ENCODE measurements at regions of chr5 and their contacts with region 1.

Region 1: GRCh38 chr5:177006265-177006972 is at the start of gene UIMC1:
- DNase-seq: peak; percentile 84 to 96 (median 89)
- ATAC-seq: peak; percentile 83
- H3K4me3 ChIP-seq: peak within 1 kb of the TSS; percentile 91
- H3K4me3 Mint-ChIP-seq: peak within 1 kb of the TSS; percentile 99
- H3K27ac ChIP-seq: peak within 1 kb of the TSS; percentile 70 to 72
- H3K27ac Mint-ChIP-seq: peak within 1 kb of the TSS; percentile 95
- H3K4me1 ChIP-seq: peaks cover 32% of the 10 kb centered on the region
- H3K4me1 Mint-ChIP-seq: peaks cover 35% of the 10 kb centered on the region
- H3K27me3 ChIP-seq: no peaks in the 10 kb centered on the region
- H3K27me3 Mint-ChIP-seq: no peaks in the 10 kb centered on the region
- CTCF ChIP-seq: no peak
- total RNA-seq, gene UIMC1: 42.3 to 50.8 TPM

Region 2: DNA sequence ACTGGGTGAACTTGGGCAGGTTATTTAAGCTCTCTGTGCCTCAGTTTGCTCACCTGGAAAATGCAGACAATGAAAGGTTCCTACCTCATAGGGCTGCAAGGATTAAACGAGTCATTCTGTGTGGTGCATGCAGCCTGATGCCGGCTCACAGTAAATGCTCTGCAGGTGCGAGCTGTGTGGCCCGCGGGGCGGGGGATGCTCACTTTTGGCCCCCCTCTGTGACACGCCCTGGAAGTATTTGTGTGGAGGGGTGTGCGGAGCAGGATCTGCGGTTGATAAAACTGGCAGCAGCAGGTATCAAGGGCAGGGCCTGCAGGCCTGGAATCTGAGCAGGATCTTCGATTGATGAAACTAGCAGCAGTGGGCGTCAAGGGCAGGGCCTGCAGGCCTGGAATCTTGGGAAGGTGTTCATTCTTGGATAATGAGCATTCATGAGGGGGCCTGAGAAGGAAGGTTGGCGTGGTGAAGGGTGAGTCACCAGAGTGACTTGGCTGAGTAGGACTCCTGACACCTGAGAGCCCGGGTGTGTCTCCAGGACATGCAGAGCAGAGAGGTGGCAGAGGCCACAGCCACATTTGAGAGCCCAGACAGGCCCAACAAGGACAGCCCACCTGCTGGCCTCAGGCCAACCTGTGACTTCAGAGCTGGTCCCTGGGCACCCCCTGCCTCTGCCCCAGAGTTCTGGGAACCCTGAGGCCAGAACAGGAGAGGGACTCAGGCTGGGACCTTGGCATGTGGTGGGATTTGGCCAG is 184.2 kb before region 1 on chr5:
- CTCF ChIA-PET with region 1: no interaction called
- POLR2A ChIA-PET with region 1: no interaction called
- intact Hi-C with region 1: no loop called
- DNase-seq: no peak
- ATAC-seq: no peak
- H3K4me3 ChIP-seq: no peak overlapping the region
- H3K4me3 Mint-ChIP-seq: no peak overlapping the region
- H3K27ac ChIP-seq: no peak overlapping the region
- H3K27ac Mint-ChIP-seq: no peak overlapping the region
- H3K4me1 ChIP-seq: peaks cover 9% of the 10 kb centered on the region
- H3K4me1 Mint-ChIP-seq: peaks cover 9% of the 10 kb centered on the region
- H3K27me3 ChIP-seq: peaks cover 18 to 31% of the 10 kb centered on the region in 2 experiments
- H3K27me3 Mint-ChIP-seq: peaks cover 62% of the 10 kb centered on the region
- CTCF ChIP-seq: no peak

Region 3: DNA sequence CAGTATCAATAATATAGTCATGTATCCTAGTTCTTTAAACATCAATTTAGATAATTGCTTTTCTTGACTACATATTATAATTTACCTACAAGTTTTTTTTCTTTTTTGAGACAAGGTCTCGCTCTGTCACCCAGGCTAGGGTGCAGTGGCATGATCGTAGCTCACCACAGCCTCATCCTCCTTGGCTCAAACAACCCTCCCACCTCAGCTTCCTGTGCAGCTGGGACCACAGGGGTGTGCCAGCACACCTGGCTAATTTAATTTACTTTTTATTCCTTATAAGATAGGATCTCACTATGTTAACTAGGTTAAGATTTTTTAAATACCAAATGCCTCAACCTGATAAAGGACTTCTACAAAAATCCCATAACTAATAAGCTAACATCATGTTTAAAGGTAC is 20.9 kb before region 1 on chr5:
- CTCF ChIA-PET with region 1: interaction called, 5 read pairs
- POLR2A ChIA-PET with region 1: interaction called, 32 read pairs
- intact Hi-C with region 1: no loop called
- DNase-seq: peak; percentile 7 to 74 (median 37)
- ATAC-seq: peak; percentile 99
- H3K4me3 ChIP-seq: no peak overlapping the region
- H3K4me3 Mint-ChIP-seq: peak overlapping the region; percentile 54
- H3K27ac ChIP-seq: peak overlapping the region in 1 of 2 donors; percentile 40
- H3K27ac Mint-ChIP-seq: peak overlapping the region; percentile 89
- H3K4me1 ChIP-seq: peaks cover 19% of the 10 kb centered on the region
- H3K4me1 Mint-ChIP-seq: peaks cover 34% of the 10 kb centered on the region
- H3K27me3 ChIP-seq: no peaks in the 10 kb centered on the region
- H3K27me3 Mint-ChIP-seq: no peaks in the 10 kb centered on the region
- CTCF ChIP-seq: no peak

Region 4: DNA sequence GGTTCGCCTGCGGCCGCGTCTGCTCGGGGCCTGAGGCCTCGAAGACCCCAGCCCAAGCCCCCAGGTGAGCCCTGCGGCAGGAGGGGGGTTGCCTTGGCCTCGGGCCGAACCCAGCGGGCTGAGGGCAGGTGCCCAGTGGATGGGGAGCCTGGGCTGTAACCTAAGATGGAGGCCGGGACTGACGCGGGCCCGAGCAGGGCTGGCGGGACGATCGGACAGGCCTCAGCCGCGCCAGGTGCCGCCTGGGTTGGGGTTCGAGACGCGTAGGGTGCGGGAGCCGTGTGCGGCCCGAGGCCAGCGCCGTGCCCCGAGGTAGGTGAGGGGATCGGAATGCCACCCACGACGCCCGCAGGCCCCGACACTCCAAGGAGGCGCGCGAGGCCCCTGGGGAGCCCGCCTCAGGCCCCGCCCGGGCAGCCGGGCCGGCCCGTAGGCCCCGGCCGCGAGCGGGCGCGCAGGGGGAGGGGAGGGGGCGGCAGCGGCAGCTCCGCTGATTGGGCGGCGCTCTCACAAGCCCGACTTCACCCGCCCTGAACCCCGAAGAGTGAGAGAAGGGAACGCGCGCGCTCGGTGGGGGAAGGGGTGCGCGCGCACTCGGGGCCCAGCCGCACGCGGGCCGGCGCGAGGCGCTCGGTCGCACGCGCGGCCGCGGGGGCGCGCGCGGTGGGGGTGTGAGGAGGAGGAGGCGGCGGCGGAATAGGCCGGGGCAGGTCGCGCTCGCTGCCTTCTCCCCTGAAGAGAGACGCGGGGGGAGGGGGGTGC is 126.9 kb after region 1 on chr5 and contains the start of gene NSD1:
- CTCF ChIA-PET with region 1: no interaction called
- POLR2A ChIA-PET with region 1: interaction called, 8 read pairs
- intact Hi-C with region 1: loop called in 1 of 2 experiments (anchors 5 kb)
- DNase-seq: peak; percentile 83 to 97 (median 90)
- ATAC-seq: peak; percentile 71
- H3K4me3 ChIP-seq: peak within 1 kb of the TSS; percentile 65
- H3K4me3 Mint-ChIP-seq: peak within 1 kb of the TSS; percentile 90
- H3K27ac ChIP-seq: peak within 1 kb of the TSS; percentile 71 to 76
- H3K27ac Mint-ChIP-seq: peak within 1 kb of the TSS; percentile 97
- H3K4me1 ChIP-seq: peaks cover 54% of the 10 kb centered on the region
- H3K4me1 Mint-ChIP-seq: peaks cover 67% of the 10 kb centered on the region
- H3K27me3 ChIP-seq: no peaks in the 10 kb centered on the region
- H3K27me3 Mint-ChIP-seq: no peaks in the 10 kb centered on the region
- CTCF ChIP-seq: no peak
- total RNA-seq, gene NSD1: 87.6 to 93.3 TPM

Measured in CD4-positive, alpha-beta T cell (primary cell).